Calu3 (cell line): ENCODE measurements at regions of chr6 and their contacts with region 1.

Region 1: DNA sequence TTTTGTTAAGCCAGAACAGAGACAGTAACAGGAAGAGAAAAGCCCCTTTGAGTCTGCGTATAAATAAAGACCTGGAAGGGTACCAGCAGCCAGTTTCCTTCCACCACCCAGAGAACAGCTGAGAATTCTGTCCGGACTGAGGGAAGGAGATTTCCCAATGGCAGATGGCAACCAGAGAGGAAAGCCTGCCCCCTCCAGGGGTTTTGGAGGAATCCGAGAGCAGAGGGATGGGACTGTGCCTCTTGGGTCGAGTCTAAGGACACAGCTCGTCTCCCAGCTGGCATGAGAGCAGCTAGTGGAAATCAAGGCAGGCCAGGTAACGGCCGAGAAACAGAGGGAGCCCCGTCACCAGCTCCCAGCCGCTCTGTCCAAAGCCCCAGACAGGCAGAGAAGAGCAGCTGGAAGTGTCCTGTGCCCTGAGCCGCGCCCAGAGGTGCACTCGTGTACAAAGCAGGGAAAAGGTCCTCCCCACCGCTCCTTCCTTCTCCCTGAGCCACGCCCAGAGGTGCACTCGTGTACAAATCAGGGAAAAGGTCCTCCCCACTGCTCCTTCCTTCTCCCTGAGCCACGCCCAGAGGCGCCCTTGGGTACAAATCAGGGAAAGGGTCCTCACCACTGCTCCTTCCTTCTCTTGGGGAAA is 134.0 kb upstream of the SNX9 start:
- DNase-seq: peak; percentile 2
- H3K4me3 Mint-ChIP-seq: no peak overlapping the region
- H3K27ac Mint-ChIP-seq: no peak overlapping the region
- H3K4me1 Mint-ChIP-seq: peaks cover 8% of the 10 kb centered on the region
- H3K27me3 Mint-ChIP-seq: peaks cover 13% of the 10 kb centered on the region
- CTCF ChIP-seq: no peak

Region 2: GRCh38 chr6:157845493-157846259 is 156.6 kb after region 1 on chr6:
- CTCF ChIA-PET with region 1: no interaction called
- intact Hi-C with region 1: loop called (anchors 5 kb)
- DNase-seq: no peak
- H3K4me3 Mint-ChIP-seq: no peak overlapping the region
- H3K27ac Mint-ChIP-seq: no peak overlapping the region
- H3K4me1 Mint-ChIP-seq: peaks cover 55% of the 10 kb centered on the region
- H3K27me3 Mint-ChIP-seq: no peaks in the 10 kb centered on the region
- CTCF ChIP-seq: no peak